ENCODE measurements at regions of chr11 and their contacts with region 1.

Region 1: GRCh38 chr11:126310228-126310991 is 6.5 kb downstream of the DCPS start:
- DNase-seq: peak; percentile 72 to 77 (median 75)
- H3K4me3 ChIP-seq: no peak overlapping the region
- H3K27ac ChIP-seq: no peak overlapping the region
- H3K4me1 ChIP-seq: peaks cover 3 to 50% (median 25%) of the 10 kb centered on the region in 4 experiments
- H3K27me3 ChIP-seq: no peaks in the 10 kb centered on the region

Region 2: DNA sequence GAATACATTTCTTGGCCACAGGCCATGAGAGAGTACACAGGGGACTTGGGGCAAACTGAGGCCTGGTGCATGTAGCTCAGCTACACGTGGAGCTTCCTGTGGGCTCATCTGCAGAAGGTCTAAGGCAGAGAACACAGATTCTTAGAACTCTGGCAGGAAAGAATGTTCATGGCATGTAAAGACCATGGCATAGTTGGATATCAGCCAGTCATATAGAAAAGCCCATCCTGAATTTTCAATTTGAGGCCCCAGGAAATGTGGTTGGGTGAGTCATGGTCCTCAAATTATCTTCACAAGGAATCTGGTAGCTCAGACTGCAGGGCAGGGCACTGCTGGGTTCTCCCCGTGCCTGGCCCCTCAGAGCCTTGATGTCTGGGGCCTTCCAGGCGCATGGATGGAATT is 31.4 kb after region 1 on chr11:
- CTCF ChIA-PET with region 1: interaction called, 10 read pairs
- POLR2A ChIA-PET with region 1: no interaction called
- DNase-seq: peak in 2 of 3 donors; percentile 64 to 73
- H3K4me3 ChIP-seq: no peak overlapping the region
- H3K27ac ChIP-seq: peak overlapping the region in 1 of 2 experiments; percentile 3
- H3K4me1 ChIP-seq: peaks cover 3 to 80% (median 60%) of the 10 kb centered on the region in 4 experiments
- H3K27me3 ChIP-seq: no peaks in the 10 kb centered on the region

Region 3: GRCh38 chr11:126391970-126392639 is 81.7 kb after region 1 on chr11:
- CTCF ChIA-PET with region 1: interaction called, 23 read pairs
- POLR2A ChIA-PET with region 1: interaction called, 3 read pairs
- DNase-seq: peak; percentile 66 to 79 (median 70)
- H3K4me3 ChIP-seq: peak overlapping the region in 4 of 7 experiments; percentile 26 to 54 (median 38)
- H3K27ac ChIP-seq: peak overlapping the region; percentile 58 to 77
- H3K4me1 ChIP-seq: peaks cover 26 to 83% (median 75%) of the 10 kb centered on the region in 4 experiments
- H3K27me3 ChIP-seq: no peaks in the 10 kb centered on the region

Region 4: DNA sequence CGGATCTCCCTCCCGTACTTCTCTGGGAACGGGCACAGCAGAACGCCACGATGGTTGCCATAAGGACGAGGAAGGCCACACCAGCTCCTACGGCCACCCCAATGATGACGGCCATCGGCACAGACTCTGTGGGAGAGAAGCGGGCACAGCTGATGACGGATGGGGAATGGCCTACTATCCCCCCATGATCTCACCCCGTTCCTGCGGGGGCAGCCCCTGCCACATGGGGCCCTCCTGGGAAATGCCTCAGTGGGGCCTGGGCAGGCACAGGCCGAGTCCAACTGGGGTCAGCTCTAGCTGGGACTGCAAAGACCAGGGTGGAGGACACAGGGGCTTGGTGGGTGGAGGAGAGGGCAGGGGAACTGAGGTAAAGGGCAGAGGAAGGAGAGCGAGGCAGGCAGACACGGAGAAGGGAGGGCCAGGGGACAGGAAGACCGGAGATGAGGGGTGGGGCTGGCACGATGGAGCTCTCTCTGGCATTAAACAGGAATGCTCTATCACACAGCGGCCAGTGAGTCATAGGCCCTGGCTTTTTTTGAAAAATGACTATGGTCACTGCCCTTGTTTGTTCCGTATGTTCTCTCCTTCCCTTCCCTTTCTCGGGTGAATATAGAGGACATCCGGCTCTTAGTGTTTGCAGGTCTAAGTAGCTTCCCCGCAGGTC is 121.1 kb after region 1 on chr11:
- CTCF ChIA-PET with region 1: interaction called, 10 read pairs
- POLR2A ChIA-PET with region 1: no interaction called
- DNase-seq: no peak
- H3K4me3 ChIP-seq: no peak overlapping the region
- H3K27ac ChIP-seq: no peak overlapping the region
- H3K4me1 ChIP-seq: peaks cover 0 to 43% (median 17%) of the 10 kb centered on the region in 4 experiments
- H3K27me3 ChIP-seq: no peaks in the 10 kb centered on the region

Region 5: GRCh38 chr11:126465573-126466188 is 155.3 kb after region 1 on chr11:
- CTCF ChIA-PET with region 1: interaction called, 15 read pairs
- POLR2A ChIA-PET with region 1: no interaction called
- DNase-seq: peak in 1 of 3 donors; percentile 49
- H3K4me3 ChIP-seq: peak overlapping the region in 1 of 7 experiments; percentile 8
- H3K27ac ChIP-seq: no peak overlapping the region
- H3K4me1 ChIP-seq: peaks cover 0 to 74% (median 54%) of the 10 kb centered on the region in 4 experiments
- H3K27me3 ChIP-seq: no peaks in the 10 kb centered on the region